H1 (cell line): ENCODE measurements at regions of chr12 and their contacts with region 1.

Region 1: GRCh38 chr12:52156736-52157565 is 34.9 kb downstream of the KRT80 start:
- DNase-seq: peak in 1 of 2 experiments; percentile 98
- H3K4me3 ChIP-seq: no peak overlapping the region
- H3K27ac ChIP-seq: no peak overlapping the region
- H3K4me1 ChIP-seq: 0 out of 7 replicates have a peak, but pooled peaks cover 0 to 2% (median under 1%) of the 10 kb centered on the region in 4 experiments
- H3K27me3 ChIP-seq: peaks cover 0 to 4% (median 2%) of the 10 kb centered on the region in 4 experiments; a peak in 2 of 7 replicates
- CTCF ChIP-seq: peak in 2 of 3 experiments; percentile 98; a peak in 3 of 4 replicates
- EP300 ChIP-seq: no peak
- POLR2A ChIP-seq: no peak
- RAD21 ChIP-seq: peak; percentile 100

Region 2: GRCh38 chr12:51951199-51951842 is 205.6 kb before region 1 on chr12 and contains the start of gene ACVR1B:
- CTCF ChIA-PET with region 1: no interaction called
- POLR2A ChIA-PET with region 1: no interaction called
- DNase-seq: peak in 1 of 2 experiments; percentile 87
- H3K4me3 ChIP-seq: peak within 1 kb of the TSS; percentile 73 to 95 (median 90)
- H3K27ac ChIP-seq: peak within 1 kb of the TSS; percentile 52; the same call in 1 of the 2 replicates
- H3K4me1 ChIP-seq: peaks cover 0 to 3% (median 2%) of the 10 kb centered on the region in 4 experiments; a peak in 6 of 7 replicates
- H3K27me3 ChIP-seq: peaks cover 7 to 47% (median 34%) of the 10 kb centered on the region in 4 experiments
- CTCF ChIP-seq: no peak
- EP300 ChIP-seq: no peak
- POLR2A ChIP-seq: peak in 1 of 2 experiments; percentile 1; a peak in 1 of 3 replicates
- RAD21 ChIP-seq: no peak
- total RNA-seq, gene ACVR1B: 13.5 and 16.0 TPM in 2 replicates

Region 3: DNA sequence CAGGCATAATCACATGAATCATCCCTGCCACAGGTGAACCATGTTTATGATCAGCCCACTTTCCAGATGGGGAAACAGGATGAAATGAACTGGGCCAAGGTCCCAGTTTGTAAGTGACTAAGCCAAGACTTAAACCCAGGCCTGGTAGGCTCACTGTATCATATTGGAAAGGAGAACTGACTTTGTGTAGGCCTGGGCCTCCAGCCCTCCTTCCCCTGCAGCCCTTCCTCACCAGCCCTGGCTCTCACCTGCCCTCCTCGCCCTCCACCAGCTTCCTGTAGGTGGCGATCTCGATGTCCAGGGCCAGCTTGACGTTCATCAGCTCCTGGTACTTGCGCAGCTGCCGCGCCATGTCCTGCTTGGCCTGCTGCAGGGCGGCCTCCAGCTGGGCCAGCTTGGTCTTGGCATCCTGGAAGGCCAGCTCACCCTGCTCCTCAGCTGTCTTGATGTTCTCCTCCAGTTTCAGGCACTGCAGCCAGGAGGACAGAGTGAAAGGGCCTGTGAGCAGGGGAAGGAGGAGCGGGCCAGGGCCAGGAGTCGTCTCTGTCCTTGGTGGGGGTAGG is 15.1 kb after region 1 on chr12:
- CTCF ChIA-PET with region 1: interaction called, 108 read pairs
- POLR2A ChIA-PET with region 1: no interaction called
- DNase-seq: peak in 1 of 2 experiments; percentile 80
- H3K4me3 ChIP-seq: no peak overlapping the region
- H3K27ac ChIP-seq: no peak overlapping the region
- H3K4me1 ChIP-seq: peaks cover 0 to 2% (median 0%) of the 10 kb centered on the region in 4 experiments; a peak in 2 of 7 replicates
- H3K27me3 ChIP-seq: no peaks in the 10 kb centered on the region
- CTCF ChIP-seq: peak; percentile 79 to 86 (median 81)
- EP300 ChIP-seq: no peak
- POLR2A ChIP-seq: no peak
- RAD21 ChIP-seq: peak; percentile 47 to 67; a peak in 3 of 4 replicates

Region 4: GRCh38 chr12:52235822-52236692 is 79.1 kb after region 1 on chr12:
- CTCF ChIA-PET with region 1: interaction called, 21 read pairs
- POLR2A ChIA-PET with region 1: no interaction called
- DNase-seq: no peak
- H3K4me3 ChIP-seq: no peak overlapping the region
- H3K27ac ChIP-seq: no peak overlapping the region
- H3K4me1 ChIP-seq: peaks cover 14 to 40% (median 25%) of the 10 kb centered on the region in 4 experiments
- H3K27me3 ChIP-seq: peaks cover 0 to 43% (median 21%) of the 10 kb centered on the region in 4 experiments; a peak in 6 of 7 replicates
- CTCF ChIP-seq: no peak
- EP300 ChIP-seq: no peak
- POLR2A ChIP-seq: no peak
- RAD21 ChIP-seq: no peak

Region 5: DNA sequence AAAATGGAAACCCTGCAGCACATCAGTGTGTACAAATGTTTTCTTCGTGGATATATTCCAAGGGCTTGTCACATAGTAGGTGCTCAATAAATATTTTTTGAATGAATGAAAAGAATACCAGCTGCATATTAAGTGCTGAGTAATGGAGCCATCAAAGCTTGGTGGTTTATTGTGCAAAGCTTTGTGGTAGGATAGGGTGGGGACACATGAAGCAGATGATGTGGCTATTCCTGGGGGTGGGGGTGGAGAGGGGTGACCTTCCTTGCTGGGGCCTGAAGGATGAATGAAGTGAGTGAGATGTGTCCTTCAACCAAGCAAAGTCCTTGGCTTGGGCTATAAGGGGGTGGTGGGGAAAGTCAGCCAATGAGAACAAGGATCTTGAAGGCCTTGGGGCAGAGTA is 138.7 kb after region 1 on chr12:
- CTCF ChIA-PET with region 1: interaction called, 10 read pairs
- POLR2A ChIA-PET with region 1: no interaction called
- DNase-seq: no peak
- H3K4me3 ChIP-seq: no peak overlapping the region
- H3K27ac ChIP-seq: no peak overlapping the region
- H3K4me1 ChIP-seq: 0 out of 7 replicates have a peak, but pooled peaks cover 0 to 2% (median 0%) of the 10 kb centered on the region in 4 experiments
- H3K27me3 ChIP-seq: peaks cover 0 to 2% (median 0%) of the 10 kb centered on the region in 4 experiments; a peak in 1 of 7 replicates
- CTCF ChIP-seq: no peak
- EP300 ChIP-seq: no peak
- POLR2A ChIP-seq: no peak
- RAD21 ChIP-seq: no peak

Region 6: DNA sequence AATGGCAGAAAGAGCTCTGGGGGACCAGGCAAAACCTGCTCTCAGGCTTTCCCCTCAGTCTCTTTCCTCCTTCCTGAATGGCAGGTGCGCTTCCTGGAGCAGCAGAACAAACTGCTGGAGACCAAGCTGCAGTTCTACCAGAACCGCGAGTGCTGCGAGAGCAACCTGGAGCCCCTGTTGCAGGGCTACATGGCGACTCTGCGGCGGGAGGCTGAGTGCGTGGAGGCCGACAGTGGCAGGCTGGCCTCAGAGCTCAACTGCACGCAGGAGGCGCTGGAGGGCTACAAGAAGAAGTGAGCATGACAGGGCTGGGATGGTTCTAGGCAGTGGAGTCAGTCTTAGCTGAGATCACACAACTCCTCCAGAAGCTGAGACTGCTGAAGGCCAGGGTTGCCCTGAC is 187.2 kb after region 1 on chr12:
- CTCF ChIA-PET with region 1: interaction called, 14 read pairs
- POLR2A ChIA-PET with region 1: no interaction called
- DNase-seq: no peak
- H3K4me3 ChIP-seq: no peak overlapping the region
- H3K27ac ChIP-seq: no peak overlapping the region
- H3K4me1 ChIP-seq: no peaks in the 10 kb centered on the region
- H3K27me3 ChIP-seq: no peaks in the 10 kb centered on the region
- CTCF ChIP-seq: no peak
- EP300 ChIP-seq: no peak
- POLR2A ChIP-seq: no peak
- RAD21 ChIP-seq: no peak; a peak in 1 of 4 replicates

Region 7: DNA sequence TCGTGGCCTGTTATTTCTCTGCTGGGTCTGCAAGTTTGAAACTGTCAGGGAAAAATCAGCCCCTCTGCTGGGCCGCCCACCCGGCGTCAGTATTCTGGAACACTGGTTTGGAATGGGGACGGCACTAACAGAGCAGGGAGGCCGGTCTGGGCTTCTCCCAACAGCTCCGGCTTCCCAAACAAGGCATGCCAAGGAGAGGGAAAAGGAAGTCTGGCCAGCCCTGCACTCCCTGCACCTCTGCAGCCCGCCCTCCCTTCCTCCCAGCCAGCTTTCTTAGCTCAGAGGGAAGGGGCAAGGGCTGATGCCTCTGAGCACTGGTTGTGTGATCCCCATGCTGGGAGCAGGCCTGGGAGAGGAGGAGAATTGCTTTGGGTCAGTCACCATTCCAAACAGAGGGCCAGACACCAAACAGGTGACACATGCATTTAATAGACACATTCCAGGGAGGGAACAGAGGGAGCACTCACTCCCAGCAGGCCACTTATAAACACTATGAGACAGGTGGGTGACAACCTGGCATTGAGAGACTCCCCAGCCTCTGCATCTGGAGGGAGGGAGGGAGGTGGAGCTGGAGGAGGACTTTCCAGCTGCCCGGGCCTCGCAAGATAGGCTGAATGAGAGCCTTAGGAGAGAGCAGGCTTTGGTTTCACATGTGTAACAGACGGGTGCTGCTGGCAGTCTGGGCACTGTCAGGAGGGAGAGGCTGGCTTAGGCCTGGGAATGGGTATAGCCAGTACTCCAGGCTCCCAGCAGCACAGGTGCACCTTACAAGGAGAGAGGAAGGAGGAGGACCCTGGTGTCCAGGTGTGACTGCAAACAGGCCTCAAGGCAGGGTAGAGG is 266.9 kb after region 1 on chr12:
- CTCF ChIA-PET with region 1: no interaction called
- POLR2A ChIA-PET with region 1: no interaction called
- DNase-seq: no peak
- H3K4me3 ChIP-seq: no peak overlapping the region
- H3K27ac ChIP-seq: no peak overlapping the region
- H3K4me1 ChIP-seq: no peaks in the 10 kb centered on the region; a peak in 2 of 7 replicates
- H3K27me3 ChIP-seq: no peaks in the 10 kb centered on the region
- CTCF ChIP-seq: no peak
- EP300 ChIP-seq: no peak
- POLR2A ChIP-seq: no peak
- RAD21 ChIP-seq: no peak